ENCODE measurements at regions of chr3 and their contacts with region 1.

Region 1: DNA sequence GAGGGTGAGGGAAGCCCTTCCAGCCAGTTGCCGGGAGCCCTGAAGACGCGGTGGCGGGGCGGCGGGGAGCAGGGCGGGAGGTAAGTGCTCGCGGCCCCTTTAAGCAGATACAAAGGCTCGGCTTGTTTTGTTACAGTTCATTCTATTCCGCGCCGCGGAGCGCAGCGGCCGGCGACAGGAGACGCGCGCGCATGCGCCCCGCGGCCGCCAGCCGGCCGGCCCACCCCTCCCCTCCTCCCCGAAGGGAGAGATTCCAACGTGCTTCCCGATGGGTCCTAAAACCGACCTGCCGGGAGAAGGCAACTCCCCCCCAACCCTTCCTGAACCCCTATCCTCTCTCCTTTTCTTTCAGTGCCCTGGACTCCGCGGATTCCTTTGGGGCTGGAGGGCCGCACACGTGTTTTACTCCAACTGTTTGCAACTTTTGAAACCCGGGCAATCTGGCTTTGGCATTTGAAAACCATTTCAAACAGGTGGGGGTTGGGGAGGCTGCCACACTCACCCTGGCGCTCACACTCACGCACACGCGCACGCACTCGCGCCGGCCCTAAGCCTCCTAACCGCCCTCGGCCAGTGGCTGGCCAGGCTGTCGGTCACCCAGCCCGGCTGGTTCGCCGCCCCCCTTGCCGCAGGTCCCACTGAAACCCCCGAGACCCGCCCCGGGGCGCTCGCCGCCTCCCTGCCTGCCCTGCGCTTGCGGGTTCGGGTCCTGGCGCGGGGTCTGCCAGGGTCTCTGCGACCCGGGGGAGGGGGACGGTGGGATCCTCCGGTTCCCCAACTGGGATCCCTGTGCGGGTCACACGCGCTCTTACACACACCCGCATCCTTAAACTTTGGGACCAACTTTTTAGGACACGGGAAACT is at the start of gene MAGI1:
- DNase-seq: peak; percentile 91
- ATAC-seq: peak; percentile 92
- total RNA-seq, gene MAGI1: 33.1 TPM

Region 2: GRCh38 chr3:65785065-65785645 is 253.8 kb before region 1 on chr3:
- intact Hi-C with region 1: loop called (anchors 2 kb)
- DNase-seq: no peak
- ATAC-seq: no peak

Region 3: GRCh38 chr3:65953301-65953812 is 85.6 kb before region 1 on chr3:
- intact Hi-C with region 1: loop called (anchors 5 kb)
- DNase-seq: no peak
- ATAC-seq: peak; percentile 70

Region 4: GRCh38 chr3:66138336-66139313 is 99.7 kb after region 1 on chr3:
- intact Hi-C with region 1: loop called (anchors 5 kb)
- DNase-seq: no peak
- ATAC-seq: peak; percentile 80

Region 5: DNA sequence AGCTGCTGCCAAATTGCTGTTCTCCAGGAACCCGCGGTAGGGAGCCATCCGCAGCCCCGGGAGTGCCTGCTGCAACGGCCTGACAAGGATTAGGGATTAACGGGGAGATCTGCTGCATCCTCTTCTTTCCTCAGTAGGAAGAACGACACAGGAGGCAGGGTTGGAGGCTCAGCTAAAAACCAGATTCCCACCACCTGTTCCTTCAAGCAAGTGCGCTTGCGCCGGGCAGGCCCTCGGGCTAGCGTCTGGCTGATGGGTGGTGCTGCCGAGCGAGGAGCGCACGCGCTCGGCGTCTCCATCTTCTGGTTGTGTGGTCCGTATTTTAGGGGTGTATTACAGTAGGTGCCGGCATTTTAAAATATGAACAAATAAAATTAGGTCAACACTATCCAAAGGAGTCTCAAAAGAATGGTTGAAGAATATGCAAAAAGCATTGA is 156.4 kb after region 1 on chr3:
- intact Hi-C with region 1: loop called (anchors 5 kb)
- DNase-seq: peak; percentile 81
- ATAC-seq: peak; percentile 67